ENCODE measurements at regions of chr2 and their contacts with region 1.

Region 1: GRCh38 chr2:137039482-137040152 is 274.3 kb downstream of the THSD7B start:
- DNase-seq: no peak
- H3K4me3 ChIP-seq: no peak overlapping the region
- H3K27ac ChIP-seq: no peak overlapping the region
- H3K4me1 ChIP-seq: no peaks in the 10 kb centered on the region
- H3K27me3 ChIP-seq: no peaks in the 10 kb centered on the region
- CTCF ChIP-seq: no peak

Region 2: DNA sequence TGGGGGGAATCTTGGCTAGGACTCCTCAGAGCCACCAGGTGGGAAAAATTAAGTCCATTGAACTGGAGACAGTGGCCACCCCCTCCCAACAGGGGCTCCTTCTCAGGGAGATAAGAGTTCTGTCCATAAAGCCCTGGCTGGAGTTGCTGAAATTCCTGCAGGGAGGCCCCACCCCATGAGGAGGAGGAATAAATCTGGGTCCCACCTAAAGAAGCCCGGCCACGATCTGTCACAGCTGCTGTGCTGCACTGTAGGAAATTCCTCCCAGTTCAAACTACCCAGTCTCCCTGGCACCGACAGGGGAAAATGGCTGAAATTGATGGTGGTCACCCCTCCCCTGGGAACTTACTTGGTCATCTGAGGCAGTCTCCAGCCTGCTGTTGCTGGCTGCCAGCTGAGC is 59.3 kb before region 1 on chr2:
- CTCF ChIA-PET with region 1: no interaction called
- dilution Hi-C with region 1: loop called (anchors 5 kb)
- in situ Hi-C with region 1: no loop called
- intact Hi-C with region 1: no loop called
- DNase-seq: no peak
- H3K4me3 ChIP-seq: no peak overlapping the region
- H3K27ac ChIP-seq: no peak overlapping the region
- H3K4me1 ChIP-seq: no peaks in the 10 kb centered on the region
- H3K27me3 ChIP-seq: no peaks in the 10 kb centered on the region
- CTCF ChIP-seq: no peak

Region 3: DNA sequence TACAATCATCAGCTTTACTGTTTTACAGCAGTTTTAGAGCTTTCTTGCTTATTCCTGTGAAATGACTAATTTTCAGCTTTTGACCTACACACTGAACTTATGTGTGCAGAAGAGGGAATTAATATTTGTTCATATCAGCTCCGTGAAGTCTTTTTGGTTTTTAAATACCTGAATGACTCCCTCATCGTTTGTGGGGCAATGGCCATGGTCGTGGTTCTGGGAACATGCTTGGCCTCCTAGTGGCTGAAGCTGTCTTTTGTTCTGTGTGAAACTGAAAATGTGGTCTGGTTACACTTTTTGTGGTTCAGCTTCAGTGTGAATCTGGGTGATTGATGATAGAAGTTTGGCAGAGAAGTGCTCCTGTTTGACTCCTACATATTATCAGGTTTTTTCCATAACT is 133.8 kb after region 1 on chr2:
- CTCF ChIA-PET with region 1: no interaction called
- dilution Hi-C with region 1: no loop called
- in situ Hi-C with region 1: no loop called
- intact Hi-C with region 1: no loop called
- DNase-seq: peak; percentile 81
- H3K4me3 ChIP-seq: no peak overlapping the region
- H3K27ac ChIP-seq: no peak overlapping the region
- H3K4me1 ChIP-seq: peaks cover 18% of the 10 kb centered on the region
- H3K27me3 ChIP-seq: no peaks in the 10 kb centered on the region
- CTCF ChIP-seq: peak; percentile 65 to 67

Region 4: GRCh38 chr2:137190411-137191195 is 151.0 kb after region 1 on chr2:
- CTCF ChIA-PET with region 1: no interaction called
- dilution Hi-C with region 1: no loop called
- in situ Hi-C with region 1: no loop called
- intact Hi-C with region 1: no loop called
- DNase-seq: no peak
- H3K4me3 ChIP-seq: no peak overlapping the region
- H3K27ac ChIP-seq: no peak overlapping the region
- H3K4me1 ChIP-seq: peaks cover 3% of the 10 kb centered on the region
- H3K27me3 ChIP-seq: no peaks in the 10 kb centered on the region
- CTCF ChIP-seq: no peak

Measured in mammary epithelial cell (primary cell).